Heart left ventricle (tissue), 16 donors: ENCODE measurements at regions of chr4 and their contacts with region 1.

Region 1: GRCh38 chr4:6470502-6471306 is 1.7 kb downstream of the PPP2R2C start:
- DNase-seq: peak; percentile 34 to 83 (median 64)
- ATAC-seq: peak in 3 of 4 donors; percentile 60 to 79 (median 62)
- H3K4me3 ChIP-seq: peak overlapping the region; percentile 32 to 60 (median 49)
- H3K27ac ChIP-seq: peak overlapping the region in 5 of 12 donors; percentile 6 to 42 (median 38)
- H3K4me1 ChIP-seq: peaks cover 0 to 21% (median 0%) of the 10 kb centered on the region in 12 donors
- H3K27me3 ChIP-seq: peaks cover 0 to 59% (median 20%) of the 10 kb centered on the region in 9 donors
- CTCF ChIP-seq: no peak
- POLR2A ChIP-seq: no peak

Region 2: DNA sequence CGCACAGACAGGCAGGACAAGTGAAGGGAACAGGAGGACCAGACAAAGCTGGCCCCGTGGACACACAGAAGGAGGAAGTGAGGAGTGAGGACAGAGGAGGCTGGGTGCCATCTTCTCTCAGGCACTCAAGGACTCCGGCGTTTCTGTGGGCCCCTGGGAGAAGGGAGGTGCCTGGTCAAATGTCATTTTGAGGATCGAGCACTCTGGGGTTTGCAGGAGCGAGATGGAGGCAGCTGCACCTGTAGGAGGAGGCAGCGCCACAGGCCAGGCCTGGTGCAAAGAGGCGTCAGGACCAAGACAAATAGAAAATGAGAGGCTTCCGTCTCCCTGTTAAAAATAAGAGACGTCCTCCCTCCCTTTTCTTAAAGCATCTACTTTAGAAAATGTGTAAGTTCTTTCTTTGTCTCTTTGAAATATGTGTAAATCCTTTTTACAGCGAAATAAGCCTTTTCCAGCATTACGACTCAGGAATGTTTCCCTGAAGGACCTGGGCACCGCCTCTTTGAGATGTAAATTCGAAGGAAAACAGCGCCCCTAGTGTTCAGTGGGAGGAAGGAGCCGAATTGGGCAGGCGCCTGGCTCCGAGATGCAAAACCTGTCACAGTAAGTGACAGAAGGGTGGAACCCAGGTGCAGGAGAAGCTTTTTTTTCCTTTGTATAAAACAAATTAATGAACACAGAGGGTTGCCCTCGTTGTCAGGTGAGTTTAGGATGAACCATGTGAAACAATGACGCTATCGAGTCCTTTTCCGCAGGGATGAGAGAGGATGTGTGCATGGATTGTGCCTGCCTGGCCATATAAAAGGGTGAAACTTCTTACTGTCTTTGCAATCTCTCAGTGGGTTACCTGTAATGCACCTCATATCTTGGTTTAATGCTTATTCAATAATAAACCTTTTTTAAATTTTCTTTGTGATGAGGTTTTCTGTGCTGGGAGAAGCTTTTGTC is 451.1 kb before region 1 on chr4:
- intact Hi-C with region 1: no loop called
- DNase-seq: no peak
- ATAC-seq: no peak
- H3K4me3 ChIP-seq: no peak overlapping the region
- H3K27ac ChIP-seq: no peak overlapping the region
- H3K4me1 ChIP-seq: no peaks in the 10 kb centered on the region
- H3K27me3 ChIP-seq: peaks cover 0 to 47% (median 6%) of the 10 kb centered on the region in 9 donors
- CTCF ChIP-seq: peak; percentile 63 to 86 (median 79)
- POLR2A ChIP-seq: no peak

Region 3: GRCh38 chr4:6546681-6547447 is 76.2 kb after region 1 on chr4:
- intact Hi-C with region 1: loop called in 1 of 10 experiments (anchors 5 kb)
- DNase-seq: peak in 3 of 5 donors; percentile 18 to 40 (median 31)
- ATAC-seq: peak in 1 of 4 donors; percentile 37
- H3K4me3 ChIP-seq: no peak overlapping the region
- H3K27ac ChIP-seq: no peak overlapping the region
- H3K4me1 ChIP-seq: peaks cover 0 to 16% (median 0%) of the 10 kb centered on the region in 12 donors
- H3K27me3 ChIP-seq: peaks cover 0 to 14% (median 0%) of the 10 kb centered on the region in 9 donors
- CTCF ChIP-seq: peak; percentile 70 to 86 (median 78)
- POLR2A ChIP-seq: no peak

Region 4: GRCh38 chr4:7210823-7211222 is 740.1 kb after region 1 on chr4:
- intact Hi-C with region 1: no loop called
- DNase-seq: peak in 1 of 5 donors; percentile 13
- ATAC-seq: no peak
- H3K4me3 ChIP-seq: no peak overlapping the region
- H3K27ac ChIP-seq: no peak overlapping the region
- H3K4me1 ChIP-seq: peaks cover 0 to 26% (median 18%) of the 10 kb centered on the region in 12 donors
- H3K27me3 ChIP-seq: peaks cover 0 to 2% (median 0%) of the 10 kb centered on the region in 9 donors
- CTCF ChIP-seq: no peak
- POLR2A ChIP-seq: no peak